Activated CD8-positive, alpha-beta T cell treated with anti-CD3 and anti-CD28 coated beads, Interleukin-2, amount 10 ng/mL, durations not matched to agents 7 days and 5 days (primary cell): ENCODE measurements at regions of chr6 and their contacts with region 1.

Region 1: DNA sequence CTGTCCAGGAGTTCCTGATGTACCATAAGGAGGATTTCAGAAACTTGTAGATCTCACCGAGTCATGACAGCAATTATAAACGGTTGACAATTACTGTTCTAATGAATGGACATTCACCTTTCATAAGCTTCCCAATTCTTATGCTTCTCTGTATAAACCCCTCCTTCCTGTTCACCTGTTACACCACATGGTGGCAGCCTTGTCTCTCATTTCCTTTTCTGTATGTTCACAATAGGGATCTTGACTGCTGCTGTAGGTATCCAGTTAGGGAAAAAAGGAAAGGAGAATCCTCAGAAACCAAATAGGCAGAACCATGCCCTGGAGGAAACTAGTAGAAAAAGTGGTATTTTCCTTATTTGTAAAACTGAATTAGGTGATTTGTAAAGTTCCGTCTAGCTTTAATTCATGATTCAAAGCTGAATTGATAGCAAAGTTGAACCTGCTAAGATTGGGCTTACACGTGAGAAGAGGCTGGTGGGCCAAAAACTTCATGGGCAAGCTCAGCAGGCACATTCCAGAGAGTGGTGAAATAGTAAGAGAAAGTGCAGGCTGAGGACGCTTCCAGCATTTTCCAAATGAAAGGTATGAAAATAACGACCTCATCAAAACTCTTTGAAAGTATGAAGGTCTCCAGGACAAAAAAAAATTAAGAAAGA is 29.0 kb upstream of the TBPL1 start:
- DNase-seq: peak; percentile 72
- ATAC-seq: peak; percentile 78
- H3K4me3 Mint-ChIP-seq: no peak overlapping the region
- H3K27ac Mint-ChIP-seq: no peak overlapping the region
- H3K4me1 Mint-ChIP-seq: no peaks in the 10 kb centered on the region
- H3K27me3 Mint-ChIP-seq: peaks cover 22% of the 10 kb centered on the region

Region 2: GRCh38 chr6:133697666-133698065 is 226.4 kb before region 1 on chr6:
- CTCF ChIA-PET with region 1: no interaction called
- POLR2A ChIA-PET with region 1: no interaction called
- DNase-seq: no peak
- ATAC-seq: no peak
- H3K4me3 Mint-ChIP-seq: no peak overlapping the region
- H3K27ac Mint-ChIP-seq: no peak overlapping the region
- H3K4me1 Mint-ChIP-seq: no peaks in the 10 kb centered on the region
- H3K27me3 Mint-ChIP-seq: peaks cover 8% of the 10 kb centered on the region

Region 3: DNA sequence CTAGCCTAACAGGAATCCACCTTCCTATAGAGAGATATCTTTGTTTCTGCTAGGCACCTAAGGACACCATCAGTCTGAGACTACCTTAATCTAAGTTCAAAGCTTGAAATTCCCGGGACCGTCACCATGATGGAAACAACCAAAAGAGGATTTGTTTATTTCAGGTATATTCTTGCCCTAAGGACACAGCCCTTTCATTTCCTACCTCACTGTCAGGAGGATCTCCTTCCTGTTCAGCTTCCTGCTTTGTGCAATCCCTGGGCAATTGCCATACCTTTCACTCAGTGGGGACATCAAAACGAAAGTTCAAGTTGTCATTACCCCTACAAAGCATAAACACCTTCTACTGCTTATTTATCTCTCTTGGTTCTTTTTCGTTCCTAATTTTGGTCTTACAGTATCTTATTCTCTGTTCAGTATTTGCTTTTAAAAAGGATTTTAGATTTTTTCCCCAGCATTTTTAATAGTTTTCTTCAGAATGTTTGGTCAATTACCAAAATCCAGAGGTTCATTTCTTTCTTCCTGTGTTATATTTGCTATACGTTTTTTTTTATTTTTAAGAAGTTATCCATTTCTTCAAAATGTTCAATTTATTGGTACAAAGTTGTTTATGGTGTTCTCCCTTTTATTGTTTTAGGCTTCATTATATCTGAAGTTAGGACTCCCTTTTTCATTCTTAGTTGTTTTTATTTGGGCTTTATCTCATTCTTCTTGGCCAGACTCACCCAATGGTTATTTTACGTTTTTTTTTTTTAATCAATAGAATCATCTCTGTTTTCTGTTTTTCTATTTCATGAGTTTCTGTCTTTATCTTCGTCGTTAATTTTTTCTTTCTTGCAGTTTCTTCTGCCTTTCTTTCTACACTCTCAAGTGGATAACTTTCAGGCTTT is 16.0 kb after region 1 on chr6:
- CTCF ChIA-PET with region 1: interaction called, 20 read pairs
- POLR2A ChIA-PET with region 1: no interaction called
- DNase-seq: no peak
- ATAC-seq: no peak
- H3K4me3 Mint-ChIP-seq: no peak overlapping the region
- H3K27ac Mint-ChIP-seq: no peak overlapping the region
- H3K4me1 Mint-ChIP-seq: peaks cover 4% of the 10 kb centered on the region
- H3K27me3 Mint-ChIP-seq: peaks cover 21% of the 10 kb centered on the region

Region 4: GRCh38 chr6:133966654-133967329 is 42.7 kb after region 1 on chr6:
- CTCF ChIA-PET with region 1: interaction called, 15 read pairs
- POLR2A ChIA-PET with region 1: no interaction called
- DNase-seq: no peak
- ATAC-seq: no peak
- H3K4me3 Mint-ChIP-seq: no peak overlapping the region
- H3K27ac Mint-ChIP-seq: peak overlapping the region; percentile 16
- H3K4me1 Mint-ChIP-seq: peaks cover 20% of the 10 kb centered on the region
- H3K27me3 Mint-ChIP-seq: no peaks in the 10 kb centered on the region

Region 5: DNA sequence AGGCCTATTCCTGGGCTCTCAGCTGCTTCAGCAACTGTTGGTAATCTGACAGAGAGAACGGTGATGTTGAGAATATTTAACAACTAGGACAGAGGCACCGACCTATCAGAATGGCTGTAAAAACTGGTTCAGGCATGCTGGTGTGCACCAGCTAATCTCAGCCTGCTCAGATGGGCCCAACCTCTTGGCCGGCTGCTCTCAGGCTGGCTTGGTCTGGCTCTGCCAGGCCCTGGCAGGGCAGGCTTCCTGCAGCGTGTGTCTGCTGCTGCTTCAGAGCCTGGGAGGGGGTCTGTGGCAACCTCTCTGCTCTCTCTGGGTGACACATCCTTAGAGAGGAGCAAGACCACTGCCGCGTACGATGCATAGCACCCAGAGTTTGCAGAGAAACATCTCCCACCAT is 123.6 kb after region 1 on chr6:
- CTCF ChIA-PET with region 1: interaction called, 11 read pairs
- POLR2A ChIA-PET with region 1: no interaction called
- DNase-seq: no peak
- ATAC-seq: no peak
- H3K4me3 Mint-ChIP-seq: no peak overlapping the region
- H3K27ac Mint-ChIP-seq: no peak overlapping the region
- H3K4me1 Mint-ChIP-seq: peaks cover 11% of the 10 kb centered on the region
- H3K27me3 Mint-ChIP-seq: peaks cover 13% of the 10 kb centered on the region

Region 6: GRCh38 chr6:134080171-134080795 is 156.2 kb after region 1 on chr6:
- CTCF ChIA-PET with region 1: interaction called, 12 read pairs
- POLR2A ChIA-PET with region 1: no interaction called
- DNase-seq: peak; percentile 22
- ATAC-seq: peak; percentile 15
- H3K4me3 Mint-ChIP-seq: no peak overlapping the region
- H3K27ac Mint-ChIP-seq: no peak overlapping the region
- H3K4me1 Mint-ChIP-seq: peaks cover 26% of the 10 kb centered on the region
- H3K27me3 Mint-ChIP-seq: peaks cover 8% of the 10 kb centered on the region

Region 7: DNA sequence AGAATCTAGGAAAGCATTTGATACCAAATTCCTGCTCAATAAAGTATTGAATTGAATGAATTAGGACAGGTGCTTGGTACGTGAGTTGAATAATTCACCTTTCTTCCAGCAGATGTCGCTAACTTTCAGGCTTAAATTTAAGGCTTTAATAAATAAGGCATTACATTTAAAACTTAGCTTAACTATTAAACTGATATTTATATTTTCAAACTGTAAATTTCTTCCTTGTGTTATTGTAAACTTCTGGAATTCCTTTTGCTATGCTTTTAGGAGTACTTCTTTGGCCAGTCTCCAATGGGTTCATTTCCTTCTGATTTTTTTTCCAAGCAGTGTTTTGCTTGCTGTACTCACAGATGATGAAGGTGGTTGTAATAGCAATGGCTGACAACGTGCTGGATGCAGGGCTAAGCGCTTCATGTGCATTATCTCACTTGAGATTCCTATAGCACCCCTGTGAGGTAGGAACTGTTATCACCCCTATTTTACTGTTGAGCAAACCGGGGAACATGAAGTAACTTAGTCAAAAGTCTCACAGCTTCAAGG is 199.7 kb after region 1 on chr6:
- CTCF ChIA-PET with region 1: interaction called, 10 read pairs
- POLR2A ChIA-PET with region 1: no interaction called
- DNase-seq: peak; percentile 31
- ATAC-seq: peak; percentile 47
- H3K4me3 Mint-ChIP-seq: no peak overlapping the region
- H3K27ac Mint-ChIP-seq: no peak overlapping the region
- H3K4me1 Mint-ChIP-seq: no peaks in the 10 kb centered on the region
- H3K27me3 Mint-ChIP-seq: peaks cover 2% of the 10 kb centered on the region